ENCODE measurements at regions of chr3 and their contacts with region 1.

Region 1: GRCh38 chr3:31968927-31969418 is 12.1 kb downstream of the OSBPL10 start:
- DNase-seq: peak; percentile 97
- ATAC-seq: peak; percentile 90
- H3K4me3 ChIP-seq: peak overlapping the region; percentile 52
- H3K27ac ChIP-seq: peak overlapping the region; percentile 92
- H3K4me1 ChIP-seq: peaks cover 45% of the 10 kb centered on the region
- H3K27me3 ChIP-seq: no peaks in the 10 kb centered on the region
- CTCF ChIP-seq: no peak

Region 2: DNA sequence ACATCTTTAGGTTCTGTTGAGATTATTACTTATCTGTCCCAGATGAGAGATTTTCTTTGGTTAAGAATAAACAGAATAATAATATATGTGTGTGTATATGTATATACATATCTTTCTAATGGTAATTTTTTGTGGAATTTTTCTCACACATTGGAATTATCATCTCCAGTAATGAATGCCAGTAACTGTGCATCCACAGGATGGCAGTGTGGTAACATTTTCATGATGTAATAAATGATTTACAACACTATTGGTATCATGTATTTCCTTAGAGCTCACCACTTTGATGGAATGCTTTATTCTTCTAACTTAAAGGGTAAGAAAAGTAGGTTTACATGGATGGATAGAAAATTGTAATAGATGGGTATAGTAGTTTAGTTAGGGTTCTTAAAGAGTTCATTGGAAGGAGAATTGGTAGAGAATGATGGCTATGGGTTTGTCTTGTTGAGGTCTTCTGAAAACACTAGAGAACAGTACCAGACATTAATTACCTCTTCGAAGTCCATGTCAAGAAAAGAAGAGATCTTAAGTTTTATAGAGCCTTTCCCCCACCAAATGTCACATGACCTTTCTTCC is 358.2 kb before region 1 on chr3:
- CTCF ChIA-PET with region 1: no interaction called
- POLR2A ChIA-PET with region 1: no interaction called
- intact Hi-C with region 1: loop called (anchors 10 kb)
- DNase-seq: peak; percentile 77
- ATAC-seq: peak; percentile 54
- H3K4me3 ChIP-seq: no peak overlapping the region
- H3K27ac ChIP-seq: no peak overlapping the region
- H3K4me1 ChIP-seq: peaks cover 19% of the 10 kb centered on the region
- H3K27me3 ChIP-seq: no peaks in the 10 kb centered on the region
- CTCF ChIP-seq: peak; percentile 87

Region 3: DNA sequence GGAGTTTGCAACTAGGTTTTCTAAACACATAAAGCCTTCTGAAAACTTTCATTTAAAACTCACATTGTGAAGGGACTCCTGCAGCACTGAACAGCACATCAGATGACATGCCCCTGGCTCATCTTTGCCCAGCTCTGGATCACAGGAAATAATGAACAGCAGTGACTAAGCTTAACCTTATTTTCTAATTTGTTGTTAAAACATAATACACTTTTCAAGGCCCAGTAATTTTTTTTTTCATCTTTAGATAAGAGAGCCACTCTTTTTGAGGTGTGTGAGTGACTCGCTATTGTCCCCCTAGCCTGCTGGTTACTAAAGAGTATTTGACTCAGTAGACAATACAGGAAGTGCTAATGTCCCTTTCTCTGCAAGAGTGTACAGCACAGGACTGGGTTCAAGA is 191.9 kb before region 1 on chr3:
- CTCF ChIA-PET with region 1: no interaction called
- POLR2A ChIA-PET with region 1: no interaction called
- intact Hi-C with region 1: loop called (anchors 5 kb)
- DNase-seq: peak; percentile 56
- ATAC-seq: peak; percentile 82
- H3K4me3 ChIP-seq: no peak overlapping the region
- H3K27ac ChIP-seq: peak overlapping the region; percentile 34
- H3K4me1 ChIP-seq: peaks cover 19% of the 10 kb centered on the region
- H3K27me3 ChIP-seq: no peaks in the 10 kb centered on the region
- CTCF ChIP-seq: no peak

Region 4: DNA sequence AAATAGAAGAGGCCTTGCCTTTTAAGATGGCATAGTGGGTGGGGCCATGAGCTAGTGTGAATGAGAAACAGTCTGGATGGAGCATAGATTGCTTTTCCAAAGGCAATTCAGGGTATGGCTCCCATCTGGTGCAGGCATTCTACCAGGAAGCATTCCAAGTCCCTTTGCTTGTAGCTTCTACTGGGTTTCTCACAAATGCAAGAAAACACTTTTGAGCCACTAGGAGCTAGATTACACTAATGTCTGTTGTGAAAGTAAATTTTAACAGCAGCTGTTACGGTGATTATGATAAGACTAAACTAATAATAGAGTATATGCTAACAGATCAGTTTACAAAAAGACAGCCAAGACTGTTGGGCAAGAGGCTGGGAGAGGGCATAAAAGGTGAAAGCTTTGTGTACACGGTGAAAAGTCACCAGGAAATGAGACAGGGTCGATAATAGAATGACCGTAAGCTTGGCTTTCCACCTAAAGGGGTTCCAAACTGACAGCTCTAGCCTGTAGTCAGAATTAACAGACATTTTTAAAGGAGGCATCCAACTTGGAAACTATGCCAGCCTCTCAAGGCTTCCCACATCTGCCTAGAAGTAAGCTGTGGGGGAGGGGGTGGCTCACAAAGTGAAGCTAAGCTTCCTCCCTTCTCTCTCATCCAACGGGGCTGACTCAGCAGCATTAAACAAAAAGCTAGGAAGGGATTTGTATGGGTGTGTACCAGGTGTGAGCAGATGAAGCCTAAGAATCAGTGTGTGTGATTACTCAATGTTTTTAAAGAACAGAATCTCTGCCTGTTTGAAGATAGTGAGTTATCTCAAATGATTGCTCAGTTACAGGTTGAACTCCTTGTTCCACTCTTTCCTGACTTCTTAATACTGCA is 76.4 kb after region 1 on chr3:
- CTCF ChIA-PET with region 1: no interaction called
- POLR2A ChIA-PET with region 1: no interaction called
- intact Hi-C with region 1: loop called (anchors 2 kb)
- DNase-seq: peak; percentile 92
- ATAC-seq: peak; percentile 87
- H3K4me3 ChIP-seq: peak overlapping the region; percentile 31
- H3K27ac ChIP-seq: peak overlapping the region; percentile 91
- H3K4me1 ChIP-seq: peaks cover 27% of the 10 kb centered on the region
- H3K27me3 ChIP-seq: no peaks in the 10 kb centered on the region
- CTCF ChIP-seq: no peak

Region 5: DNA sequence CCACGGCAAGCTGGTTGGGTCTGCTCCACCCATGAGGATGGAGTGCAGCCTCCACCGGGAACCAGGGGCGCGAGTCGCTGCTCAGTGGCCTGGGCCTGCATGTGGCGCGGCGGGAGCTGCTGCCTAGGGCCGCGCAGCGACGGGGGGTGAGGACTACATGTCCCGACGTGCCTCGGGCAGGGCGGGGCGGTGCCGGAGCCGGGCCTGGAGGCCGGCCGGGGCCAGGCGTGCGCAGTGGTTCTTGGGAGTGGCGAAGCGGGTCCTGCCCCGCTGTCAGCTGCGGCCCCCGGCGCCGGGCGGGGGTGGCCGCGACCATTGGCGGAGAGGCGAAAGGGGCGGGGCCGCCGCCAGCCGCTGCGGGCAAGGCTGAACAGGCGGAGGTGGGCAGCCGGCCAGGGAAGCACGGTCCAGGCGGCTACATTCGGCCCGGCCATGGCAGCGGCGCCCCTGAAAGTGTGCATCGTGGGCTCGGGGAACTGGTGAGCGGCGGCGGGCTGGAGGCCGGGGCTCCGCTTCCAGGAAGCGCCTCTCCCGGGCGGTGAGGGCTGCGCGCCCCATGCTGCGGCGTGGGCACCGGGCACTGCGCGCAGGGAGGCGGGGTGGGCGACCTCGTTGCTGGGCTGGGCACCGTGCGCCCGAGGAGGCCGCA is 137.4 kb after region 1 on chr3 and contains the start of gene GPD1L:
- CTCF ChIA-PET with region 1: interaction called, 3 read pairs
- POLR2A ChIA-PET with region 1: no interaction called
- intact Hi-C with region 1: loop called (anchors 1 kb)
- DNase-seq: peak; percentile 98
- ATAC-seq: peak; percentile 90
- H3K4me3 ChIP-seq: peak within 1 kb of the TSS; percentile 93
- H3K27ac ChIP-seq: peak within 1 kb of the TSS; percentile 86
- H3K4me1 ChIP-seq: peaks cover 51% of the 10 kb centered on the region
- H3K27me3 ChIP-seq: no peaks in the 10 kb centered on the region
- CTCF ChIP-seq: no peak
- total RNA-seq, gene GPD1L: 33.7 and 42.8 TPM in 2 replicates

Region 6: GRCh38 chr3:32257639-32258038 is 288.7 kb after region 1 on chr3:
- CTCF ChIA-PET with region 1: no interaction called
- POLR2A ChIA-PET with region 1: no interaction called
- intact Hi-C with region 1: loop called (anchors 10 kb)
- DNase-seq: peak; percentile 90
- ATAC-seq: peak; percentile 98
- H3K4me3 ChIP-seq: no peak overlapping the region
- H3K27ac ChIP-seq: peak overlapping the region; percentile 94
- H3K4me1 ChIP-seq: peaks cover 30% of the 10 kb centered on the region
- H3K27me3 ChIP-seq: no peaks in the 10 kb centered on the region
- CTCF ChIP-seq: no peak

Measured in PC-3 (cell line).